Endothelial cell of umbilical vein (primary cell): ENCODE measurements at regions of chr1 and their contacts with region 1.

Region 1: GRCh38 chr1:11707621-11708276 is 16.2 kb downstream of the DRAXIN start:
- DNase-seq: no peak
- H3K4me3 ChIP-seq: no peak overlapping the region
- H3K27ac ChIP-seq: no peak overlapping the region
- H3K4me1 ChIP-seq: no peaks in the 10 kb centered on the region
- H3K27me3 ChIP-seq: peaks cover 4 to 16% of the 10 kb centered on the region in 2 experiments
- CTCF ChIP-seq: no peak
- POLR2A ChIP-seq: no peak

Region 2: DNA sequence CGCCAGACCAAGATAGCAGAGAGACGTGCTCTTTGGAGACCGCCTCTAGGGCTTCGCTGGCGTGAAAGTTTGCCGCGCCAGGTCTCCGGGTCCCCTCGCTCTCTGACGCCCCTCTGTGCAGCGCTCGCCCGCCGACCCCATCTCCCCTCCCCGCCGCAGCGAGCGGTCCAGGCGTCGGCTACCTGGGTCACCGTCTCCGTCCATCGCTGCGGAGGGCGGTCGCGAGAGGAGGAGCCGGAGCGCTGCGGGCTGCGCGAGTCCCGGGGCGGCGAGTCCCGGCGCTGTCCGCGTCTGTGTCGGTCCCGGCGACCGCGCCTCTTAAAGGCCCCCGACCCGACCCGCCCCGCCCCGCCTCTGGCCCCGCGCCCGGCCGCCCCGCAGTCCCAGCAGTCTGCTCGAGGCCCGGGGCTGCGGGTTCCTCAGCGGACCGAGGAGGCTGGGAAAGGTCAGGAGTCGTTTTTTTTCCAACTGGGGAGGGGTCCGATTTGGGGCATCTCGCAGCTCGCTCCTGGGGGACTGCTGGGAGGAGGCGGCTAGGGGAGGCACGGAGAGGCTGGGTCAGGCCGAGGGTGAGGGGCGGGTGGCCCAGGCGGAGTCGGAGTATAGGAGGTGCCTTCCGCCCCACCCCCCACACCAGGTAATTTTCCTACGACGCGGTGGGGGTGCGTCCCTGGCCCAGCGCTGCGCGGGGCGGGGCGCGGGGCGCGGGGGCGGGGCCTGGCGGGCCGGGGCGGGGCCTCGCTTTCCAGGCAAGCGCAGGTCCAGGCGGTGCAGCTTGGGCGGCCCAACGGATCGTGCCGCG is 53.4 kb before region 1 on chr1 and contains the starts of genes FBXO2 and FBXO44:
- CTCF ChIA-PET with region 1: interaction called, 42 read pairs
- POLR2A ChIA-PET with region 1: interaction called, 3 read pairs
- dilution Hi-C with region 1: no loop called
- intact Hi-C with region 1: loop called (anchors 1 kb)
- DNase-seq: no peak
- H3K4me3 ChIP-seq: peak within 1 kb of the TSS; percentile 6 to 62 (median 34)
- H3K27ac ChIP-seq: no peak within 1 kb of the TSS
- H3K4me1 ChIP-seq: peaks cover 3% of the 10 kb centered on the region
- H3K27me3 ChIP-seq: no peaks in the 10 kb centered on the region
- CTCF ChIP-seq: no peak
- POLR2A ChIP-seq: no peak
- total RNA-seq, gene FBXO2: 0.42 and 0.88 TPM in 2 replicates
- total RNA-seq, gene FBXO44: 14.5 and 16.8 TPM in 2 replicates

Region 3: GRCh38 chr1:11670747-11671146 is 37.0 kb before region 1 on chr1:
- CTCF ChIA-PET with region 1: interaction called, 5 read pairs
- POLR2A ChIA-PET with region 1: no interaction called
- dilution Hi-C with region 1: no loop called
- intact Hi-C with region 1: loop called (anchors 2 kb)
- DNase-seq: no peak
- H3K4me3 ChIP-seq: no peak overlapping the region
- H3K27ac ChIP-seq: no peak overlapping the region
- H3K4me1 ChIP-seq: no peaks in the 10 kb centered on the region
- H3K27me3 ChIP-seq: no peaks in the 10 kb centered on the region
- CTCF ChIP-seq: no peak
- POLR2A ChIP-seq: no peak

Region 4: DNA sequence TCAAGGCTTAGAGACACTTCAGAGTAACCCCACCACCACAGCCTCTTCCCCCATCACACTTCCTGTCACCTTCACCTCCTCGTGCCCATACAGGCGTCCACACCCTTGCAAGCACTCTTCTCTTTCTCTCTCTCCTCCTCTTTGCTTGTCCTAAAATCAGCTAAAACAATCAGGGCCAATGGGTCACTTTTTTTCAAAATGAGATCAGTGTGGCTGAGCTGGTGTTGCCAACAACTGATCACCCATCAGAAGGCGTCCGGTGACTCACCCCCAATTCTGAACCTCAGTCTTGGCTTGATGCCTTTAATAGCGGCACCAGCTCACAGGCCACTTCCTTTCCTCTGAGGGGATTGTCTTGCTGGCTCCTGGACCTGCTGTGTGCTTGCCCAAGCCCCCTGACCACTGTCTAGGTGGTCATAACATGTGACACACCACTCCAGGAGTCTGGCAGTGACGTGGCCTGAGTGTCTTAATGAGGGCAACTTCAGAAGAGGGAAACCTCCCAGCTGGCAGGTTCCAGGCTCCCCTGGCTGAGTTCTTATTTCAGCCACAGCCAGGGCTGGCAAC is 14.6 kb before region 1 on chr1:
- CTCF ChIA-PET with region 1: interaction called, 18 read pairs
- POLR2A ChIA-PET with region 1: interaction called, 3 read pairs
- dilution Hi-C with region 1: no loop called
- intact Hi-C with region 1: no loop called
- DNase-seq: peak; percentile 87
- H3K4me3 ChIP-seq: no peak overlapping the region
- H3K27ac ChIP-seq: no peak overlapping the region
- H3K4me1 ChIP-seq: peaks cover 19% of the 10 kb centered on the region
- H3K27me3 ChIP-seq: peaks cover 25 to 32% of the 10 kb centered on the region in 2 experiments
- CTCF ChIP-seq: no peak
- POLR2A ChIP-seq: no peak

Region 5: GRCh38 chr1:11719313-11720032 is 11.7 kb after region 1 on chr1:
- CTCF ChIA-PET with region 1: interaction called, 39 read pairs
- POLR2A ChIA-PET with region 1: no interaction called
- dilution Hi-C with region 1: no loop called
- intact Hi-C with region 1: no loop called
- DNase-seq: peak; percentile 76
- H3K4me3 ChIP-seq: peak overlapping the region in 2 of 3 experiments; percentile 4 to 34
- H3K27ac ChIP-seq: no peak overlapping the region
- H3K4me1 ChIP-seq: peaks cover 4% of the 10 kb centered on the region
- H3K27me3 ChIP-seq: peaks cover 0 to 4% of the 10 kb centered on the region in 2 experiments
- CTCF ChIP-seq: peak; percentile 88 to 91
- POLR2A ChIP-seq: no peak